Activated CD4-positive, alpha-beta memory T cell treated with anti-CD3 and anti-CD28 coated beads for 36 hours (primary cell): ENCODE measurements at regions of chr2 and their contacts with region 1.

Region 1: DNA sequence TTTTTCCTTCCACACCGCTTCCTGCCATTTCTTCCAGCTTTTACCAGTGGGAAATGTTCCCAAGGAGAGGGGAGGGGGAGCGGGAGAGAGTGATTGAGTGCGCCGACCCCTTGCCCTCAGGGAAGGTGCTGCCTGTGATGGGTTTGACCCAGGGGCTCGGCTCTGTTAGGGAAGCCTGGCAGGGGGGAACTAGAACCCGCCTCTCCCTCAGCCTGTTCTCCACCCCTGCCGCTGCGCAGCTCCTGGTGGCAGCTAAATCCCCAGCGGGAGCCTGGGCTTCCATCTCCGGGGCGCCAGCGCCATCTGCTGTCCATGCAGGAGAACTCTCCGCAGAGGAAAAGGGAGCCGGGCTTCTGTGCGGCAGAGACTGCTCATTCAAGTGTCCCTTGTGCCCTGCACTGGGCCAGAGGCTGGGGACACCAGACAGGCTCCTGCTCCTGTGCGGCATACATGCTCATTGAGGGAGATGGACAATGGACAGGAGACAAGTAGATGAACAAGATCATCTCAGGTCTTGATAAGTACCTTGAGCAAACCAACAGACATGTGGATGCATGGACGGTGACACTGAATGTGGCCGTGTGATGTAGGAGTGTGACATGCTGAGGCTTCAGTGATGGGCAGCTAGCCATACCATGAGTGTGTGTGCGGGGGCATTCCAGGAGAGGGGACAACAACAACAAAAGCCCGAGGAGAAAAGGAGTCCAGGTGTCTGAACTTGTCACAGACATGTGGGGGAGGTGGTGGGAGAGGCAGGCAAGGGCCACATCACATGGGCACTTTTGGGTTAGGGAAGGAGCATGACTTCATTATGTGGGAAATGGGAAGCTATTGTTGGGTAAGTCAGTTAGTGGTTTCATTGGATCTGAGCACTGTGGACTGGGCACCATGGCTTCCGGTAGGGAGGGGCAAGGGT is 13.3 kb downstream of the CHPF start:
- DNase-seq: peak; percentile 88
- H3K4me3 Mint-ChIP-seq: no peak overlapping the region
- H3K27ac Mint-ChIP-seq: no peak overlapping the region
- H3K4me1 Mint-ChIP-seq: no peaks in the 10 kb centered on the region
- H3K27me3 Mint-ChIP-seq: peaks cover 55% of the 10 kb centered on the region

Region 2: GRCh38 chr2:219402665-219403515 is 127.4 kb before region 1 on chr2:
- CTCF ChIA-PET with region 1: interaction called, 118 read pairs
- POLR2A ChIA-PET with region 1: interaction called, 3 read pairs
- intact Hi-C with region 1: loop called (anchors 1 kb)
- DNase-seq: peak; percentile 70
- H3K4me3 Mint-ChIP-seq: no peak overlapping the region
- H3K27ac Mint-ChIP-seq: no peak overlapping the region
- H3K4me1 Mint-ChIP-seq: no peaks in the 10 kb centered on the region
- H3K27me3 Mint-ChIP-seq: peaks cover 5% of the 10 kb centered on the region

Region 3: DNA sequence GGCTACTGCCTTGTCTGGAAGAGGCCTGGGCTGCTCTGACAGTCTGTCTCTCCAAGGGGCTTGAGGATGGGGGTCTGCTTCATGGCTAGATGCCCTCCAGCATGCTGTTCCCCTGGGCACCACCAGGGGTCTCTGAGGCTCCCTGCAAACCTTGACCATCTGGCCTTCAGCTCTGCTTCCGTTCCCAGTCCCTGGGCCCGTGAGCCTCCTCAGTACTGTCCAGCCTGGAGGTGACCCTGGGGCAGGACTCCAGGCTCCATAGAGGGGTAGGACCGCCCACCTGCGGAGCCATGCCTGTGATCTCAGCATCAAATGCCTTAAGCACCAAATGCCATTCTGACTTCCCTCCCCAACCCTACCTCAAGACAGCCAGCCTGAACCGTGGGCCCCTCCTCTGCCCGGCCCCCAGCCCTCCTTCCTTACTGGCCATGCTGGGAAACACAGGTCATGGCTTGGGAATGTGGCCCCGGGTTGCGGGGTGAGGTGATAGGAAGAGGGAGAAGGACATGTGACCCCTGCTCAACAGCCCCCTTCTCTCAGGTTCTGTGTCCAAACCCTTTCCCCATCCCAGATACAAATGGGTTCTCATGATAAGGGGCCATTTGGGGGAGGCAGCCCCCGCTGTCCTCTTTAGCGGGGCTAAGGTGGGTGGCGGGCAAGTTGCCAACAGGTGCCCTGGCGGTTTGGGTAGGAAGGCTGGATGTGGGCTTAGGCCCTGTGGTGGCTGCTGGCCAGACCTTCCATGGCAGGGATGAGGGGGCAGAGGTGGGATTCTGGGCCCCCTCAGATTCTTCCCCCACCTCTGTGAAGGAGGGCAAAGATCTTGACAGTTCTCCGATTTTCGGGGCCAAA is 70.6 kb before region 1 on chr2:
- CTCF ChIA-PET with region 1: interaction called, 43 read pairs
- POLR2A ChIA-PET with region 1: no interaction called
- intact Hi-C with region 1: loop called (anchors 1 kb)
- DNase-seq: peak; percentile 51
- H3K4me3 Mint-ChIP-seq: no peak overlapping the region
- H3K27ac Mint-ChIP-seq: no peak overlapping the region
- H3K4me1 Mint-ChIP-seq: peaks cover 5% of the 10 kb centered on the region
- H3K27me3 Mint-ChIP-seq: no peaks in the 10 kb centered on the region

Region 4: GRCh38 chr2:219475697-219476651 is 54.3 kb before region 1 on chr2:
- CTCF ChIA-PET with region 1: interaction called, 95 read pairs
- POLR2A ChIA-PET with region 1: no interaction called
- intact Hi-C with region 1: loop called (anchors 1 kb)
- DNase-seq: peak; percentile 78
- H3K4me3 Mint-ChIP-seq: no peak overlapping the region
- H3K27ac Mint-ChIP-seq: no peak overlapping the region
- H3K4me1 Mint-ChIP-seq: peaks cover 4% of the 10 kb centered on the region
- H3K27me3 Mint-ChIP-seq: peaks cover 3% of the 10 kb centered on the region

Region 5: GRCh38 chr2:219484343-219485200 is 45.7 kb before region 1 on chr2:
- CTCF ChIA-PET with region 1: interaction called, 19 read pairs
- POLR2A ChIA-PET with region 1: no interaction called
- intact Hi-C with region 1: no loop called
- DNase-seq: no peak
- H3K4me3 Mint-ChIP-seq: no peak overlapping the region
- H3K27ac Mint-ChIP-seq: no peak overlapping the region
- H3K4me1 Mint-ChIP-seq: peaks cover 2% of the 10 kb centered on the region
- H3K27me3 Mint-ChIP-seq: peaks cover 35% of the 10 kb centered on the region

Region 6: GRCh38 chr2:219509780-219510511 is 20.4 kb before region 1 on chr2:
- CTCF ChIA-PET with region 1: interaction called, 76 read pairs
- POLR2A ChIA-PET with region 1: no interaction called
- intact Hi-C with region 1: no loop called
- DNase-seq: peak; percentile 65
- H3K4me3 Mint-ChIP-seq: no peak overlapping the region
- H3K27ac Mint-ChIP-seq: no peak overlapping the region
- H3K4me1 Mint-ChIP-seq: peaks cover 25% of the 10 kb centered on the region
- H3K27me3 Mint-ChIP-seq: peaks cover 46% of the 10 kb centered on the region

Region 7: DNA sequence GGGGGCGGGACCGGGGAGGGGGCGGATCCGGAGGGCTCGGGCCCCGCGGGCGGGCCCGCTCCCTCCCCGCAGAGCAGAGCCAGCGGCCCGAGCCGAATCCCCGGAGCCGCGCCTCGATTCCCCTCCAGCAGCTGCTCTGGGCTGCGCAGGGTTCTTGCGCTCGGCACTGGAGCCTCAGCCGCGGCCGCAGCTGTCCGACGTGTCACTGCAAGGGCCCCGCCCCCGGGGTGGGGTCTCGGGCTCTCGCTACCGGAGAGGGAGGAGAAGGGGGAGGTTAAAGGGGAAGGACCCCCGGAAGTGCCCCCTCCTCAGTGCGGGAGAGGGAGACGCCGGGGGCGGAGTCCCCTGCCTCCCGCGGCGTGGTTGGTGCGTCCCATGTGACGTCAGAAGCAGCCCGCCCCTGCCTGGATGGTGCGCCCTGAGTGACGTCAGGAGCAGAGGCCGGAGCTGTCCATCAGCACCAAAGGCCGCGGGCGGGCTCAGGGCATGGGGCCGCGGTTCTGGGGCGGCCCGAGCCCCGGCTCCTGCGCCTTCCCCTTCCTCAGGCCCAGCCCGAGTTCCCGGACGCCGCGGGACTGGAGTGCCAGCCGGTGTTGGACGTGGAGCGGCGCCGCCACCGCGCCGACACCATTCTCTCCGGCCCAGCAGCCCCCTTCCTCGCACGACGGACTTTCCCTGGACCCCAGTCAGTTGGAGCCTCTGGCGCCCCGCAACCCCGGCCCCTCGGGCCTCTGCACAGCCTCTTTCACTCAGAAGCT is 13.5 kb after region 1 on chr2 and contains the starts of genes CHPF and TMEM198:
- CTCF ChIA-PET with region 1: interaction called, 30 read pairs
- POLR2A ChIA-PET with region 1: interaction called, 4 read pairs
- intact Hi-C with region 1: no loop called
- DNase-seq: peak; percentile 98
- H3K4me3 Mint-ChIP-seq: peak within 1 kb of the TSS; percentile 92
- H3K27ac Mint-ChIP-seq: peak within 1 kb of the TSS; percentile 65
- H3K4me1 Mint-ChIP-seq: peaks cover 22% of the 10 kb centered on the region
- H3K27me3 Mint-ChIP-seq: peaks cover 5% of the 10 kb centered on the region
- total RNA-seq, gene CHPF: 19.9 to 21.0 TPM
- total RNA-seq, gene TMEM198: 2.6 to 4.4 TPM